ENCODE measurements at regions of chr11 and their contacts with region 1.

Region 1: GRCh38 chr11:65013692-65014145 is 241 bp upstream of the ARL2 start:
- DNase-seq: peak in 8 of 9 donors; percentile 77 to 93 (median 90)
- ATAC-seq: peak; percentile 94
- H3K4me3 ChIP-seq: peak overlapping the region; percentile 97
- H3K4me3 Mint-ChIP-seq: peak overlapping the region; percentile 90 to 95 (median 92)
- H3K27ac ChIP-seq: peak overlapping the region; percentile 84
- H3K27ac Mint-ChIP-seq: peak overlapping the region; percentile 89 to 99 (median 95)
- H3K4me1 ChIP-seq: peaks cover 4 to 9% of the 10 kb centered on the region in 2 donors
- H3K4me1 Mint-ChIP-seq: peaks cover 14 to 33% (median 29%) of the 10 kb centered on the region in 7 donors
- H3K27me3 ChIP-seq: no peaks in the 10 kb centered on the region
- H3K27me3 Mint-ChIP-seq: no peaks in the 10 kb centered on the region

Region 2: DNA sequence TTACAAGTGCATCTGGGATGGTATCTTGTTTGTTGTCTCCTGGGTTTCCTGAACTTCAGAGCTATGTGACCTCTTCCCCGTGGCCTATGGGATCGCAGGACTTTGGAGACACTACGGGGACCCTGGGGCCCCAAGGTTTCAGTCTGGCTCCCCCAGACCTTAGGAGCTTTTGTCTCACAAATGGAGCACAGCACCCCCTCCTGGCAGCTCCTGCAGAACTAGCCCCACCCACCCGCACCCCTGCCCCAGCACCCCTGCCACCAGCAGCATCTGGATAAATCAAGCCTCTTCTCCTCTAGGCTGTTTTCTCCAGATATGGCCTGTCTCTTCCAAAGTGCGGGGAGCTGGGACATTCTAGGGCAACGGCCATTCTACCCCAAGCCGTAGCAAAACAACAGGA is 1107.1 kb before region 1 on chr11:
- CTCF ChIA-PET with region 1: no interaction called
- POLR2A ChIA-PET with region 1: no interaction called
- intact Hi-C with region 1: no loop called
- DNase-seq: peak in 7 of 9 donors; percentile 38 to 65 (median 60)
- ATAC-seq: peak; percentile 70
- H3K4me3 ChIP-seq: no peak overlapping the region
- H3K4me3 Mint-ChIP-seq: no peak overlapping the region
- H3K27ac ChIP-seq: no peak overlapping the region
- H3K27ac Mint-ChIP-seq: peak overlapping the region in 4 of 9 donors; percentile 17 to 80 (median 61)
- H3K4me1 ChIP-seq: no peaks in the 10 kb centered on the region
- H3K4me1 Mint-ChIP-seq: peaks cover 0 to 6% (median 3%) of the 10 kb centered on the region in 7 donors
- H3K27me3 ChIP-seq: no peaks in the 10 kb centered on the region
- H3K27me3 Mint-ChIP-seq: no peaks in the 10 kb centered on the region

Region 3: GRCh38 chr11:64742889-64743590 is 270.7 kb before region 1 on chr11:
- CTCF ChIA-PET with region 1: no interaction called
- POLR2A ChIA-PET with region 1: interaction called, 3 read pairs
- intact Hi-C with region 1: loop called in 1 of 2 experiments (anchors 5 kb)
- DNase-seq: peak; percentile 60 to 91 (median 78)
- ATAC-seq: peak; percentile 45
- H3K4me3 ChIP-seq: peak overlapping the region; percentile 98
- H3K4me3 Mint-ChIP-seq: peak overlapping the region in 9 of 10 donors; percentile 89 to 99 (median 97)
- H3K27ac ChIP-seq: peak overlapping the region; percentile 97
- H3K27ac Mint-ChIP-seq: peak overlapping the region in 5 of 9 donors; percentile 88 to 100 (median 98)
- H3K4me1 ChIP-seq: peaks cover 9 to 16% of the 10 kb centered on the region in 2 donors
- H3K4me1 Mint-ChIP-seq: peaks cover 18 to 47% (median 39%) of the 10 kb centered on the region in 7 donors
- H3K27me3 ChIP-seq: no peaks in the 10 kb centered on the region
- H3K27me3 Mint-ChIP-seq: no peaks in the 10 kb centered on the region

Region 4: DNA sequence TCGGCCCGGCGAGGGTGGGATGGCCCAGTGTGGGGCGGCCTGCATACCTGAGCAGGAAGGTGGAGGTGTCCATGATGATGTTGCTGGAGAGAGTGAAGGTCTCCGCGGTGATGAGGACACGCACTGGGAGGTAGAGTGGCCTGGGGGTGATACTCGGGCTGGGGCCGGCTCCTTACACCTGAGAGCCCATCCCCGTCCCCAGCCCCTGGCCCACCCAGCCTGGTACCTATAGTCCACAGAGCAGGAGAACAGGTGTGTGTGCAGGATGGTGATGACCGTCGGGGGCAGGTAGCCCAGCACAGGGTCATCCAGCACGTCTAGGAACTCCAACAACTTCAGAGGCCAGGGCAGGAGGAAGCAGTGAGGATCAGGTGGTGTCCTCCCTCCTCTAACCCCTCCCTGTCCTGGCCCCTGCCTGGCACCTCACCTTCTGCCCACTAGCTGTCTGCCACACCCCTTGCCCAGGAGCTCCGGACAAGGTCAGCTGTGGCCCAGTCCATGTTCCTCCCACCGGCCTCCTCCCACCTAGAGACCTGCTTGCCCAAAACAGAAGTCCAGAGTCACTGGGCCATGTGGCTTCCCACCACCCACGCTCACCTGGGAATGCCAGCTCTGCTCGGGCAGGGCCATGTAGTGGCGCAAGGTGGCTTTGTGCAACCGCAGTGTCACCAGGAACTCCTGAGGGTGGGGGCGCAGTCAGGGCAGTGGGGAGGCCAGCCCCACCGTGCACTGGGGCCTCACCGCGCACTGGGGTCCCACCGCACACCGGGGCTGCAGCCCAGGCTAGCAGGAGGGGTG is 108.0 kb before region 1 on chr11:
- CTCF ChIA-PET with region 1: no interaction called
- POLR2A ChIA-PET with region 1: no interaction called
- intact Hi-C with region 1: no loop called
- DNase-seq: no peak
- ATAC-seq: no peak
- H3K4me3 ChIP-seq: no peak overlapping the region
- H3K4me3 Mint-ChIP-seq: no peak overlapping the region
- H3K27ac ChIP-seq: no peak overlapping the region
- H3K27ac Mint-ChIP-seq: no peak overlapping the region
- H3K4me1 ChIP-seq: peaks cover under 1 to 3% of the 10 kb centered on the region in 2 donors
- H3K4me1 Mint-ChIP-seq: peaks cover 0 to 7% (median 7%) of the 10 kb centered on the region in 7 donors
- H3K27me3 ChIP-seq: no peaks in the 10 kb centered on the region
- H3K27me3 Mint-ChIP-seq: no peaks in the 10 kb centered on the region

Region 5: GRCh38 chr11:64924102-64924851 is 89.4 kb before region 1 on chr11 and contains the start of gene PPP2R5B:
- CTCF ChIA-PET with region 1: interaction called, 3 read pairs
- POLR2A ChIA-PET with region 1: interaction called, 9 read pairs
- intact Hi-C with region 1: loop called (anchors 1 kb)
- DNase-seq: peak; percentile 79 to 92 (median 89)
- ATAC-seq: peak; percentile 95
- H3K4me3 ChIP-seq: peak within 1 kb of the TSS; percentile 67
- H3K4me3 Mint-ChIP-seq: peak within 1 kb of the TSS; percentile 89 to 99 (median 96)
- H3K27ac ChIP-seq: peak within 1 kb of the TSS; percentile 81
- H3K27ac Mint-ChIP-seq: peak within 1 kb of the TSS; percentile 95 to 100 (median 98)
- H3K4me1 ChIP-seq: peaks cover 11 to 15% of the 10 kb centered on the region in 2 donors
- H3K4me1 Mint-ChIP-seq: peaks cover 9 to 24% (median 14%) of the 10 kb centered on the region in 7 donors
- H3K27me3 ChIP-seq: no peaks in the 10 kb centered on the region
- H3K27me3 Mint-ChIP-seq: no peaks in the 10 kb centered on the region
- total RNA-seq, gene PPP2R5B: 11.9 to 19.1 (median 18.8) TPM

Region 6: GRCh38 chr11:65060913-65061408 is 47.2 kb after region 1 on chr11:
- CTCF ChIA-PET with region 1: interaction called, 3 read pairs
- POLR2A ChIA-PET with region 1: no interaction called
- intact Hi-C with region 1: loop called in 1 of 2 experiments (anchors 1 kb)
- DNase-seq: no peak
- ATAC-seq: no peak
- H3K4me3 ChIP-seq: no peak overlapping the region
- H3K4me3 Mint-ChIP-seq: no peak overlapping the region
- H3K27ac ChIP-seq: no peak overlapping the region
- H3K27ac Mint-ChIP-seq: peak overlapping the region in 1 of 9 donors; percentile 25
- H3K4me1 ChIP-seq: no peaks in the 10 kb centered on the region
- H3K4me1 Mint-ChIP-seq: peaks cover 0 to 18% (median 0%) of the 10 kb centered on the region in 7 donors
- H3K27me3 ChIP-seq: no peaks in the 10 kb centered on the region
- H3K27me3 Mint-ChIP-seq: no peaks in the 10 kb centered on the region

Region 7: GRCh38 chr11:65095974-65096806 is 82.5 kb after region 1 on chr11 and contains the start of gene VPS51:
- CTCF ChIA-PET with region 1: no interaction called
- POLR2A ChIA-PET with region 1: interaction called, 3 read pairs
- intact Hi-C with region 1: loop called (anchors 1 kb)
- DNase-seq: peak; percentile 71 to 92 (median 87)
- ATAC-seq: peak; percentile 93
- H3K4me3 ChIP-seq: peak within 1 kb of the TSS; percentile 92
- H3K4me3 Mint-ChIP-seq: peak within 1 kb of the TSS; percentile 83 to 97 (median 94)
- H3K27ac ChIP-seq: peak within 1 kb of the TSS; percentile 88
- H3K27ac Mint-ChIP-seq: peak within 1 kb of the TSS; percentile 89 to 98 (median 97)
- H3K4me1 ChIP-seq: peaks cover 9 to 15% of the 10 kb centered on the region in 2 donors
- H3K4me1 Mint-ChIP-seq: peaks cover 8 to 28% (median 19%) of the 10 kb centered on the region in 7 donors
- H3K27me3 ChIP-seq: no peaks in the 10 kb centered on the region
- H3K27me3 Mint-ChIP-seq: no peaks in the 10 kb centered on the region
- total RNA-seq, gene VPS51: 159 to 269 (median 256) TPM

Region 8: GRCh38 chr11:65180877-65181568 is 167.3 kb after region 1 on chr11:
- CTCF ChIA-PET with region 1: interaction called, 3 read pairs
- POLR2A ChIA-PET with region 1: no interaction called
- intact Hi-C with region 1: loop called in 1 of 2 experiments (anchors 1 kb)
- DNase-seq: peak in 8 of 9 donors; percentile 41 to 71 (median 45)
- ATAC-seq: peak; percentile 85
- H3K4me3 ChIP-seq: peak overlapping the region; percentile 67
- H3K4me3 Mint-ChIP-seq: peak overlapping the region; percentile 80 to 94 (median 90)
- H3K27ac ChIP-seq: peak overlapping the region; percentile 93
- H3K27ac Mint-ChIP-seq: peak overlapping the region; percentile 36 to 91 (median 84)
- H3K4me1 ChIP-seq: peaks cover 6 to 8% of the 10 kb centered on the region in 2 donors
- H3K4me1 Mint-ChIP-seq: peaks cover 7 to 30% (median 22%) of the 10 kb centered on the region in 7 donors
- H3K27me3 ChIP-seq: no peaks in the 10 kb centered on the region
- H3K27me3 Mint-ChIP-seq: peaks cover 0 to 22% (median 0%) of the 10 kb centered on the region in 5 donors